Caco-2 (cell line): ENCODE measurements at regions of chr15 and their contacts with region 1.

Region 1: DNA sequence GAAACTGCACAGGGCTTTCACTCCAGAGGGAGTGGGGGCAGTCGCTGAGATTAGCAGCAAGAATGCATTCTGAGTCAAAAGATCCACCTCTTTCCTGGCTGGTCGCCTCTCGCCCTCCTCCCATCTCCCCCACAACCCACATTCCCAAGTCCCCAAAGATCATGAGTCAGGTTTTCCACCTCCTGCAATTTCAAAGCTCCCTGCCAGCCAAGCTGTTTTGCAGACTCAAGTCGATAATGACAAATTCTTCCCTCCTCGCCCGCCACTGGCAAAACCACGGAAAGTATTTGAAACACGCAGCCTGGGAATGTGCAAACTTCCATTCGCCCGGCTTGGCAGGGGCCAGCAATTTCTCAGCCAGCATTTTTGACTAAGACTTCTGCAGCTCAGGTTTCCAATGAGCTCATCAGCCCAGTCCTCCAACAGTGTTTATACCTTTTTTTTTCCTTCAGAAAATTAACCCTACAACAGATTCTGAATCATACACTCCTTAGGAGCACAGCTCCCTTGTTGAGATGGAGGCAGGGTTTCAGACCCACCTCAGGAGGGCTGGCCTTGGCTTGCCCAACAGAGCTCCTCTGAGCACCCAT is 181.4 kb downstream of the SMAD6 start:
- DNase-seq: peak; percentile 68 to 77
- H3K4me3 ChIP-seq: no peak overlapping the region
- H3K4me3 Mint-ChIP-seq: peak overlapping the region; percentile 55
- H3K27ac Mint-ChIP-seq: peak overlapping the region; percentile 3
- H3K4me1 ChIP-seq: peaks cover 12% of the 10 kb centered on the region
- H3K4me1 Mint-ChIP-seq: peaks cover 12% of the 10 kb centered on the region
- H3K27me3 ChIP-seq: no peaks in the 10 kb centered on the region
- H3K27me3 Mint-ChIP-seq: no peaks in the 10 kb centered on the region
- CTCF ChIP-seq: no peak

Region 2: DNA sequence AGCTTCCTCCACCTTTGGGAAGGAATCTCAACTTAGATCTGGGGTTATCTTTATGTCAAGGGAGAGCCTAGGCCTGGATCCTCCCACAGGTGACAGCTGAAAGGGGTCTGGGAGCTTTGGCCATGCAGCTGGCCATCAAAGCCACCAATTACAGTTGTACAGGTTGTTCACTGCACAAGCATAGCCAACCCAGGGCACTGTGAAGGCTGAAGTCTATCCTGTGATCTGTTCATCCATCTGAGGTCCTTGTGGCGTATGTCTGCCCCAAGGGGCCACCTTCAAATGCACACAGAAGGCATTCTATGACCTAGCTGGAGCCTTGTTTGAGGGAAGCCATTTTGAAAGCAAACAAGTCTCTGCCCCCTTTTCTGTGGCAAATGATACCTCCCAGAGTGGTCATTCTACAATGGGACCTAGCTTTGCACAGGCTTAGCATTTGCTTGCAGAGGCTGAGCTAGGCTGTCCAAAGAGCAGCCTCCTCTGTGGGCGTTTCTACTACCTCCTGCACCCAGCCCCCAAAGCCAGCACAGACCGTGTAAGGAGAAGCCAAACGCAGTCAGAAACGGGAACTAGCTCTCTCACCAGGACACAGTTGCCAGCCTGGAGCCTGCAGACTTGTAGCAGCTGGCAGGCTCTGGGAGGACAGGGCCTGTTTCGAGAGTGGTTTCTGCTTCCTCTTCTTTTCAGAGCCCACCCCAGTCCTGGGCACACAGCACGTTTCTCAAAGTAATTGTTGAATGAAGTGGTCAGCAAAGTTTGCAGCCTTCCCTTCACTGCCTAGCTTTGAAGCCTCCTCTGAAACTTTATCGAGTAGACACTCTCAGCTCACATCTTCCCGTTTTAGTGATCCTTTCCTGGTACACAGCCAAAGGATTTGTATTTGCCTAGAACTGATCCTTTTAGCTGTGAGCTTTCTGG is 24.7 kb after region 1 on chr15:
- CTCF ChIA-PET with region 1: interaction called, 5 read pairs
- POLR2A ChIA-PET with region 1: no interaction called
- intact Hi-C with region 1: loop called (anchors 1 kb)
- DNase-seq: peak in 1 of 2 experiments; percentile 26
- H3K4me3 ChIP-seq: no peak overlapping the region
- H3K4me3 Mint-ChIP-seq: no peak overlapping the region
- H3K27ac Mint-ChIP-seq: no peak overlapping the region
- H3K4me1 ChIP-seq: peaks cover 9% of the 10 kb centered on the region; the same call in 1 of the 2 replicates
- H3K4me1 Mint-ChIP-seq: no peaks in the 10 kb centered on the region
- H3K27me3 ChIP-seq: no peaks in the 10 kb centered on the region
- H3K27me3 Mint-ChIP-seq: no peaks in the 10 kb centered on the region
- CTCF ChIP-seq: no peak